ENCODE measurements at regions of chr2 and their contacts with region 1.

Region 1: GRCh38 chr2:119914266-119914665 is 98.6 kb upstream of the EPB41L5 start:
- DNase-seq: no peak

Region 2: DNA sequence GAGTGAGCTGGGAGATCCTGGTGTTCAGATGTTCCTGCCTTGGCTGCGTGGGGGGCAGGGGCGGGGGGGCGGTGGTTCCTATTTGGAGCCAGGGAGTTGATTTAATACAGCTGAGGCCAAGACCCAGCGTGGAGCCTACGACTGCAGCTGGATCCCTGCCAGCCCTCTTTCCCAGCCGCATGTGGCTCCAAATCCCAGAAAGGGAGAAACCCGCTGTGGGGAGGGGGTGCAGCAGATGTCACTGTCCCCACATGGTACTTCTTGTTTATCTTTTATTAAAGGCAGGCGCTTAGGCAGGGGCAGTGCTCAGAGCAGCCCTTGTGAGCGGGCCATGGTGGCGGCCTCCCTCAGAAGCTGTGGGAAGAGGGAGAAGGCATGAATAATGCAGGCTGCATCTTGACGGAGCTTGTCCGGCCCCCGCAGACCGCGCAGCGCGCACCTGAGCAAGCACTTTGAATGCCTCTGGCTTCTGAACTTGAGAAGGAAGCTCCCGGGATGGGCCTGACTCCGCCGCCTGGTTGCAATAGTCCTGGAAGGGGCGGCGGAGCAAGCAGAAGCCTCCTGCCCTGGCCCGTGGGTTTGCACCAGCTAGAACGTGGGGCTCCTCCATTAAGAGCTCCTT is 933.5 kb after region 1 on chr2:
- intact Hi-C with region 1: loop called in 1 of 2 experiments (anchors 5 kb)
- DNase-seq: peak; percentile 80